Prostate gland (tissue), 2 donors: ENCODE measurements at regions of chr3 and their contacts with region 1.

Region 1: GRCh38 chr3:52001443-52001974 is 5.8 kb upstream of the RPL29 start:
- DNase-seq: peak; percentile 61
- H3K4me3 ChIP-seq: no peak overlapping the region
- H3K27ac ChIP-seq: no peak overlapping the region
- H3K4me1 ChIP-seq: peaks cover 4% of the 10 kb centered on the region
- H3K27me3 ChIP-seq: no peaks in the 10 kb centered on the region
- CTCF ChIP-seq: peak; percentile 87 to 95 (median 91)
- POLR2A ChIP-seq: no peak

Region 2: DNA sequence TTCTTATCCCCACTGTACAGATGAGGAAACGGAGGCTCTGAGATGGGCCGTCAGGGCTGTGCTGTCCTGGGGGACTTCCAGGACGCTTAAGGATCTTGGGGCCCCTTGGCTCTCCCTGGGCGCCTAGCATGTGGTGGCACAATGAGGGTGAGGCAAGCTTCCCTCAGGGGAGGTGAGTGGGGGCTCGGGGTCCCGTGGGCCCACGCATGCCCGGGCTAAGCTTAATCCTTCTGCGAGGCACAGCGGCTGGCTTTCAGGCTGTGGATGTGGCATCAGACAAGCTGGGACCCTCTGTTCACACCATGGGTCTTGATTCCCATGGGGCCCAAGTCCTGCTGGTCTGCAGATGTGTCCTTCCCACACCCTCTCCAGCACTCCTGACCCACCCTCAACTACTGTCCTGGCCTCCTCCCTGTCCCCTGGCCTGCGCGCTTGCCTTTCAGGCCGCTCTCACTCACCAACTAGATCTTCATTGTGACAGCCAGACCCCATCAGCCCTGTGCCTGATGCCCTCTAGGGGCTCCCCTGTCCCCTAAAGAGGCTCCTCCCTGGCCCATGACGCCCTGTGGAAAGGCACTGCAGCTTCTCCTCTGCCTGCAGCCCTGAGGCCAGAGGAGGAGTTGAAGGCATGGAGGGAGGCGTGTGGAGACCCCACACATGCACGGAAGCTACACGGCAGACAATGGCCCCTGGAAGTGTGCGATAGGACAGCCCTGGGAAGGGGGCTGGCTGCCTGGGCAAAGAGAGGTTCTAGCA is 43.5 kb after region 1 on chr3:
- intact Hi-C with region 1: loop called (anchors 2 kb)
- DNase-seq: no peak
- H3K4me3 ChIP-seq: no peak overlapping the region
- H3K27ac ChIP-seq: no peak overlapping the region
- H3K4me1 ChIP-seq: no peaks in the 10 kb centered on the region
- H3K27me3 ChIP-seq: no peaks in the 10 kb centered on the region
- CTCF ChIP-seq: no peak
- POLR2A ChIP-seq: no peak

Region 3: GRCh38 chr3:52123106-52123725 is 121.7 kb after region 1 on chr3:
- intact Hi-C with region 1: loop called (anchors 5 kb)
- DNase-seq: peak; percentile 68
- H3K4me3 ChIP-seq: no peak overlapping the region
- H3K27ac ChIP-seq: no peak overlapping the region
- H3K4me1 ChIP-seq: no peaks in the 10 kb centered on the region
- H3K27me3 ChIP-seq: no peaks in the 10 kb centered on the region
- CTCF ChIP-seq: peak; percentile 84 to 96 (median 90)
- POLR2A ChIP-seq: no peak

Region 4: GRCh38 chr3:52144034-52144795 is 142.7 kb after region 1 on chr3:
- intact Hi-C with region 1: loop called (anchors 1 kb)
- DNase-seq: peak; percentile 90
- H3K4me3 ChIP-seq: no peak overlapping the region
- H3K27ac ChIP-seq: no peak overlapping the region
- H3K4me1 ChIP-seq: no peaks in the 10 kb centered on the region
- H3K27me3 ChIP-seq: no peaks in the 10 kb centered on the region
- CTCF ChIP-seq: peak; percentile 93 to 99 (median 98)
- POLR2A ChIP-seq: no peak

Region 5: DNA sequence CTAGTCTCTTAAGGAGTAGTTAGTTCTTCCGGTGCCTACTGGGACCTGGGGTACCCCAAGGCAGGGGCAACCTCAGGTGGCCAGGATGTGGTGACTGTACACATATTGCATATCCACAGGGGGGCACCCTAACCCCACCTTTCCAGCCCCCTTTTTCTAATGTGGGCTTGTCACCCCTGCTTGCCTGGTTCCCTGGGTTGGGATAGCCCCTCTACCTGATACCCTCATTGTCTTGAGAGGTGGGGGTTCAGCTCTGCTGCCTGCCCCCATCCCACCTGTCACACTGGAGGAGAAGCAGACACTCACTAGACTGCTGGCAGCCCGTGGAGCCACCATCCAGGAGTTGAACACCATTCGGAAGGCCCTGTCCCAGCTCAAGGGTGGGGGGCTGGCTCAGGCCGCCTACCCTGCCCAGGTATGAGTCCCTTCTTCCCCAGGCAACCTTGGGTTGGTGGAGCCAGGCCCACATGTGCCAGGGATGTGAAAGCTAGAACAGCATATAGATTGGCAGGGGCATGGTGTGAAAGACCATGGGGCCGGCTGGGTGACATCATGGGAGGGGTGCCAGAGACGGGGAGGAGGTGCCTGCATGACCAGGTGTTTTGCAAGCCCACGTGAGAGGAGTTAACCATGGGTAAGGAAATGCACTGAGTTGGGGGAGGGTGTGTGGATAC is 290.1 kb after region 1 on chr3:
- intact Hi-C with region 1: no loop called
- DNase-seq: no peak
- H3K4me3 ChIP-seq: no peak overlapping the region
- H3K27ac ChIP-seq: no peak overlapping the region
- H3K4me1 ChIP-seq: no peaks in the 10 kb centered on the region
- H3K27me3 ChIP-seq: no peaks in the 10 kb centered on the region
- CTCF ChIP-seq: peak in 2 of 4 experiments; percentile 18 to 44
- POLR2A ChIP-seq: no peak

Region 6: DNA sequence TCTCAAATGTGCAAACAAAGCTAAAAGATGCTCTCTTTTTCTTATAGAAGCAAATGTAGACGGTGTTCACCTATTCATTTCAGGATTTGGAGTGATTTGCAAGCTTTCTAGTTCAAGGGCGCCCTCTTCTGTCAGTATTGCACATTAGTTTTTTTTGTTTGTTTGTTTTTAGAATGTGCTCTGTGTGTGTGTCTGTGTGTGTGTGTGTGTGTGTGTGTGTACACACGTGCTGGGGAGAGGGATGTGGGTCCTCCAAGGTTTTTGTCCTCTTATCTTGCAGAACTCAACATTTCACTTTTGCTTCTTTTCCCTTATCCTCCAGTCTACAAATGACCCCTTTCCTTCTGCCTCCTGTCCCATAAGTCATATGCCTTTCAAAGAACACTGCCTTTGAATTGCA is 338.1 kb after region 1 on chr3:
- intact Hi-C with region 1: loop called (anchors 5 kb)
- DNase-seq: peak; percentile 61
- H3K4me3 ChIP-seq: no peak overlapping the region
- H3K27ac ChIP-seq: no peak overlapping the region
- H3K4me1 ChIP-seq: no peaks in the 10 kb centered on the region
- H3K27me3 ChIP-seq: no peaks in the 10 kb centered on the region
- CTCF ChIP-seq: peak; percentile 42 to 85 (median 71)
- POLR2A ChIP-seq: no peak